Transverse colon (tissue), 4 donors: ENCODE measurements at regions of chr9 and their contacts with region 1.

Region 1: DNA sequence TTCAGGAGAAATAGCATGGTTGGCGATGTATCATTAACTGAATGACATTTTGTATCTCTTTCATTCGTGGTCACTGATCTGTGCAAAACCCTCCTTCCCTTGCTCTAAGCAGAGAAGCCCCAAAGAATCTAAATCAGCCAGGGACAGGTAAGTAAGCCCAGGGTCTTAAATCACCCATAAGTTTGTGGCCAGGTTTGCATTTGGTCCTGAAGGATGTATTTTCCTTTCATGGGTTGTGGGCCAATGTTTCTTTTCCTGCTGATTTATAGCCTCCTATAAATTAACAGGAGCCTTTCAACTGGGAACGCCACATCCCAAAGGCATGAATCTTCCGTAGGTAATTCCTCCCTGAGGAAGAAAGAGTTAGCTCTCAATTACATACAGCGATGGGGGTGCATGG is 217.5 kb upstream of the TNC start:
- DNase-seq: no peak
- H3K4me3 ChIP-seq: no peak overlapping the region
- H3K27ac ChIP-seq: no peak overlapping the region
- H3K4me1 ChIP-seq: no peaks in the 10 kb centered on the region
- H3K27me3 ChIP-seq: no peaks in the 10 kb centered on the region
- CTCF ChIP-seq: no peak
- EP300 ChIP-seq: no peak
- POLR2A ChIP-seq: no peak

Region 2: GRCh38 chr9:115058684-115059315 is 276.6 kb before region 1 on chr9:
- in situ Hi-C with region 1: no loop called
- intact Hi-C with region 1: loop called (anchors 5 kb)
- DNase-seq: no peak
- H3K4me3 ChIP-seq: no peak overlapping the region
- H3K27ac ChIP-seq: peak overlapping the region; percentile 12 to 82 (median 57)
- H3K4me1 ChIP-seq: peaks cover 0 to 7% (median 3%) of the 10 kb centered on the region in 4 donors
- H3K27me3 ChIP-seq: peaks cover 7% of the 10 kb centered on the region
- CTCF ChIP-seq: no peak
- EP300 ChIP-seq: no peak
- POLR2A ChIP-seq: no peak

Region 3: DNA sequence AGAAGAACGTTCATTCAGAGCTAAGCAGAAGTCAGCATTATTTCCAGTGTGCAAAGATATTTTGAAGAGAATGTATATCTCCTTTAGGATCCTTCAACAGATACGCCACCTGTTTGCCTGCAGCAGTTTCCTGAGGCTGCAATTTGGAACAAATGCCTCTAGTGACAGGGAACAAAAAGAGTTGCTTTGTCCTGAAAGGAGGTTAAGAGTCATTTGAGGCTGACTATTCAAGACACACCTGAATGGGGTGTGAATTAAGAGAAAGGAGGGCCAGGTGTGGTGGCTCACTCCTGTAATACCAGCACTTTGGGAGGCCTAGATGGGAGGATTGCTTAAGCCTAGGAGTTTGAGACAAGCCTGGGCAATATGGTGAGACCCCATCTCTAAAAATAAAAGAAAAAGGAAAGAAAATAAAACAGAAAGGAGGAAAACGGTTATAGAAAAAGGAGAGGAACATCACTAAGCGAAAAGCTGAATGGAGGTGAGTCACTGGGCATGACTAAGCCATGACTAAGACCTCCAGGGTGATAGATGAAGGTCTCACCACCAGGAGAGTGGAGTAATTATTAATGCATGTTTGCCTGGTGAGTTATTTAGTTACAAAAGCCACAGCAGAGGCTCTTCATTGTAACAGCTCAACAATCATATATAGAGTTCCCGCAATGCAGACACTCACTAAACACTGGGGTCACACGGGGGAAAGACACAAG is 37.7 kb after region 1 on chr9:
- in situ Hi-C with region 1: no loop called
- intact Hi-C with region 1: no loop called
- DNase-seq: no peak
- H3K4me3 ChIP-seq: no peak overlapping the region
- H3K27ac ChIP-seq: no peak overlapping the region
- H3K4me1 ChIP-seq: no peaks in the 10 kb centered on the region
- H3K27me3 ChIP-seq: no peaks in the 10 kb centered on the region
- CTCF ChIP-seq: no peak
- EP300 ChIP-seq: no peak
- POLR2A ChIP-seq: no peak